Left cardiac atrium (tissue), 4 donors: ENCODE measurements at regions of chr10 and their contacts with region 1.

Region 1: DNA sequence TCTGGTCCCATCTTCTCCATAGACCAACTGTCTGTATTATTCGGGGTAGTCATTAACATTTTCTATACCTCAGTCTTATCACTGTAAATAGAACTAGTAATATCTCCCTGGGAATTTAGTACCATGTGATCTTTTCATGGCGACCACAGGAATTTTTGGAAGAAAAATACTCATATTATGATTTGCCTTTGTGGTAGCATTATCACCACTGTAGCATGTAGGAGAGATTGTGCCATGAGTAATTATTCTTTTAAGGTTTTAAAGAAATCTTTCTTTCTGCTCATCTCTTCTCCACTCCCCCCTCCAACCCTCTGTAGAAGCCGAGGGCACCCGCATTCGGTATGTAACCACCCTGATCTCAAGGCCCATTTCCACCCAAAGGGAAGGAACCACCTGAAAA is 25.0 kb downstream of the ZNF365 start:
- DNase-seq: no peak
- ATAC-seq: no peak

Region 2: DNA sequence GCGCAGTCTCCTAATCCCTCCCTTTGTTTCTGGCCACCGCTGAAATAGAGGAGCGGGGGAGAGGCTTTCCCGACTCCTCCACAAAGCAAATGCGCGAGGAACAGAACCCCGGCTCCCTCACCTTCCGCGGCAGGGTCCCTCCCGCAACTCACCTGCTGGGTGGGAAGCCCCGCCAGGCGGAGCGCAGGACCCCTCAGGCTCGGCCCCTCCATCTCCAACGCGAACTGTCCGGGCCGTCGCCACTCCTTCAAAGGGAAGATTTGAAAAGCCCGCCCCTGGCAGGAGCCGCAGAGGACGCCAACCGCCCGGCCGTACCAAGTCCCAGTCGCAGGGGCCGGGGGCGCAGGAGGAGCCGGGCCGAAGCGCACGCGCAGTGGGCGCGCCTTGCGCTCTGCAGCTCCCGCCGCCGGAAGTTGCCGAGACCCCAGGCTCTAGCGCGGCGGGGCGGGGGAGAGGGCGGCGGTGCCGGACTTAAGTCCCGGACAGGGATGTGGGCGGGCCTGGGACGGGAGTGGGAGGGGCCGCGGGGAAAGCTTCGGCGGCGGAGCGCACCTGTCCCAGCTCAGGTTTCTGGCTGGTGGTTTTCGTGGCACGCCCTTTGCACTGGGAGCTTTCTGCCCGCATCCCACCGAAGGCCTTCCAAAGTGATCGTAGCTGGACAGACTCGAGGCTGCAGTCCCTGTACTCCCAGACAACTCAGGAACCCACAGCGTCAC is 130.7 kb before region 1 on chr10 and contains the start of gene RTKN2:
- intact Hi-C with region 1: loop called in 1 of 2 experiments (anchors 5 kb)
- DNase-seq: peak; percentile 69
- ATAC-seq: peak; percentile 94 to 96
- total RNA-seq, gene RTKN2: 0.13 TPM in 1 of 2 donors, not detected in the other

Region 3: GRCh38 chr10:62384057-62384446 is 15.2 kb before region 1 on chr10:
- intact Hi-C with region 1: no loop called
- DNase-seq: no peak
- ATAC-seq: peak; percentile 66 to 67